ENCODE measurements at regions of chr11 and their contacts with region 1.

Region 1: GRCh38 chr11:72924568-72925190 is 110.5 kb downstream of the ATG16L2 start:
- DNase-seq: peak in 5 of 9 donors; percentile 18 to 49 (median 41)
- ATAC-seq: peak; percentile 61
- H3K4me3 ChIP-seq: no peak overlapping the region
- H3K4me3 Mint-ChIP-seq: no peak overlapping the region
- H3K27ac ChIP-seq: no peak overlapping the region
- H3K27ac Mint-ChIP-seq: peak overlapping the region in 5 of 9 donors; percentile 20 to 65 (median 34)
- H3K4me1 ChIP-seq: no peaks in the 10 kb centered on the region
- H3K4me1 Mint-ChIP-seq: peaks cover 4 to 18% (median 12%) of the 10 kb centered on the region in 7 donors
- H3K27me3 ChIP-seq: no peaks in the 10 kb centered on the region
- H3K27me3 Mint-ChIP-seq: no peaks in the 10 kb centered on the region

Region 2: GRCh38 chr11:72885749-72886609 is 38.7 kb before region 1 on chr11:
- CTCF ChIA-PET with region 1: no interaction called
- POLR2A ChIA-PET with region 1: no interaction called
- intact Hi-C with region 1: no loop called
- DNase-seq: no peak
- ATAC-seq: no peak
- H3K4me3 ChIP-seq: no peak overlapping the region
- H3K4me3 Mint-ChIP-seq: no peak overlapping the region
- H3K27ac ChIP-seq: no peak overlapping the region
- H3K27ac Mint-ChIP-seq: peak overlapping the region in 3 of 9 donors; percentile 6 to 61 (median 60)
- H3K4me1 ChIP-seq: no peaks in the 10 kb centered on the region
- H3K4me1 Mint-ChIP-seq: no peaks in the 10 kb centered on the region
- H3K27me3 ChIP-seq: no peaks in the 10 kb centered on the region
- H3K27me3 Mint-ChIP-seq: no peaks in the 10 kb centered on the region

Region 3: DNA sequence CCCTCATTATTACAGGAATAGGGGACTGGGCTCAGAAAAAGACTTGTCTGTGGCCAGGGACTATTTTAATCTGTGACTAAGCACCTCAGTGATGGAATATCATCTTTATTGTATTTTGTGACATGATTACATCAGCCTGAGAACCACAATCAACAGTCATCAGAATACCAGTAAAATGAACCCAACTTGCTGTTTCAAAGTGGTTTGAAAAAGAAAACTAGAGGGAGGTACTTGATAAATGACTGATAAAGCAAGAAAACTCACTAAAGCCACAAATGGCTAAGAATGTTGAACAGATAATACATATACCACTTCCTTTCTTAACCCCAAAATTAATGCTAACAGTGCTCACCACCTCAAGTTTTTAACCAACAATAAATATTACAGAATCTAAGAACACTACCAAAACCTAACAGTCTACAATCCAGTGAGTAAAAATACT is 45.2 kb after region 1 on chr11:
- CTCF ChIA-PET with region 1: no interaction called
- POLR2A ChIA-PET with region 1: no interaction called
- intact Hi-C with region 1: loop called in 1 of 2 experiments (anchors 2 kb)
- DNase-seq: no peak
- ATAC-seq: peak; percentile 77
- H3K4me3 ChIP-seq: no peak overlapping the region
- H3K4me3 Mint-ChIP-seq: peak overlapping the region in 1 of 10 donors; percentile 42
- H3K27ac ChIP-seq: no peak overlapping the region
- H3K27ac Mint-ChIP-seq: peak overlapping the region in 1 of 9 donors; percentile 47
- H3K4me1 ChIP-seq: peaks cover 0 to 15% of the 10 kb centered on the region in 2 donors
- H3K4me1 Mint-ChIP-seq: peaks cover 6 to 51% (median 22%) of the 10 kb centered on the region in 7 donors
- H3K27me3 ChIP-seq: no peaks in the 10 kb centered on the region
- H3K27me3 Mint-ChIP-seq: no peaks in the 10 kb centered on the region